ENCODE measurements at regions of chr10 and their contacts with region 1.

Region 1: DNA sequence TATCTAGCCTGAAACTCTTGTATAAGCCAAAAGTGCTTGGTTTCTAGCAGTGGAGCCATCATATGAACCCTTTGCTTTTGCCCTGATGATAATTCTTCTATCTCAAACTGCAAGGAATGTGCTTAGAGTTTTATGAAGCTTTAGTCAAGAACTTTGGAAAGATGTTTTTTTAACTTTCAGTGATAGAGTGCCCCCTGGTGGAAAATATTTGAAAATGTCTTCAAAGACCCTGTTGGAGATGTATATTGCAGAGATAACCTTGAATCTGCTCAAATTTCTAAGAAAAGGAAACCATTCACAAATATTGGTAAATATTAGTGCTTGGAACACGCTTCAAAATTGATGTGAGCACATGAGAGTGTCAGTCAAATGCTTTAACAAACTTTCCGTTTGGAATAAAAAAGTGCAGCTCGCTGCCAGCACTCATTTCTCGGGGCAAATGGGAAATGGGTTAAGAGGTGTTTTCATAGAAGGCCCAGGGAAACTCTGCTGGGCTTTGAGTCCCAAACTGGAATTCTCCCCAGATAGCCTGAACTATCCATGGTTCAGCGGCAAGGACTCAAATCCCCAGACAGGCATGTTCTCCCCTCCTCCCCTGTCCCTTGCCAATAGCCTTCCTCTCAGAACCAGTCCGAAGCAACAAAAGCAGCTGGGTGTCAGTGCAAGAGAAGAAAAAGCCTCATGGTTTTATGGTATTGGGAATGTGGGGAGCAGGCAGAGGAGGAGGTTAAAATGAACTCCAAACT is 129.3 kb downstream of the MYOF start:
- DNase-seq: no peak
- ATAC-seq: no peak
- H3K4me3 Mint-ChIP-seq: no peak overlapping the region
- H3K27ac Mint-ChIP-seq: no peak overlapping the region
- H3K4me1 Mint-ChIP-seq: no peaks in the 10 kb centered on the region
- H3K27me3 Mint-ChIP-seq: peaks cover 12% of the 10 kb centered on the region
- CTCF ChIP-seq: peak; percentile 52

Region 2: DNA sequence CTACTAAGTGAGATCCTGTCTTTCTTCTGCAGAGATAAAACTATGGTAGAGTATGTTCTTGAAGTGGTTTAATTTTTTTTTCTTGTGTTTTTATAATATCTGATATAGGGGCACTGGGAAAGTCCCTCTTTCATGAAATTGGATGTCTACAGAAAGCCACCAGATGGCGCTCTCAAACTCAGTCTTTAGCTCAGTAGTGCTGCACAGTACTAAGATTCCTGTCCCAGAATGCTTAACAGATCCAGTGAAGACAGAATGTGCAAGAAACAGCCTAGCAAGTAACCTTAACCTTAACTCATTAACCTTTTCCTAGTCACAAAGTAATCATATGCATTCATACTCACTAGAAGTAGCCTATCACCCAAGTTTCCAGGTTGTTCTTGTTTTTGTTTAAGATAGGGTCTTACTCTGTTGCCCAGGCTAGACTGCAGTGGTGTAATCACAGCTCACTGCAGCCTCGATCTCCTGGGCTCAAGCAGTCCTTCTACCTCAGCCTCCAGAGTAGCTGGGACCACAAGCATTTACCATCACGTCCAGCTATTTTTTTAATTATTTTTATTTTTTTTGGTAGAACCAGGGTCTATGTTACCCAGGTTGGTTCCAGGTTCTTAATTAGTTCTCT is 835.7 kb before region 1 on chr10:
- CTCF ChIA-PET with region 1: no interaction called
- POLR2A ChIA-PET with region 1: no interaction called
- intact Hi-C with region 1: loop called (anchors 2 kb)
- DNase-seq: no peak
- ATAC-seq: peak; percentile 88
- H3K4me3 Mint-ChIP-seq: no peak overlapping the region
- H3K27ac Mint-ChIP-seq: no peak overlapping the region
- H3K4me1 Mint-ChIP-seq: peaks cover 6% of the 10 kb centered on the region
- H3K27me3 Mint-ChIP-seq: no peaks in the 10 kb centered on the region
- CTCF ChIP-seq: peak; percentile 30

Region 3: DNA sequence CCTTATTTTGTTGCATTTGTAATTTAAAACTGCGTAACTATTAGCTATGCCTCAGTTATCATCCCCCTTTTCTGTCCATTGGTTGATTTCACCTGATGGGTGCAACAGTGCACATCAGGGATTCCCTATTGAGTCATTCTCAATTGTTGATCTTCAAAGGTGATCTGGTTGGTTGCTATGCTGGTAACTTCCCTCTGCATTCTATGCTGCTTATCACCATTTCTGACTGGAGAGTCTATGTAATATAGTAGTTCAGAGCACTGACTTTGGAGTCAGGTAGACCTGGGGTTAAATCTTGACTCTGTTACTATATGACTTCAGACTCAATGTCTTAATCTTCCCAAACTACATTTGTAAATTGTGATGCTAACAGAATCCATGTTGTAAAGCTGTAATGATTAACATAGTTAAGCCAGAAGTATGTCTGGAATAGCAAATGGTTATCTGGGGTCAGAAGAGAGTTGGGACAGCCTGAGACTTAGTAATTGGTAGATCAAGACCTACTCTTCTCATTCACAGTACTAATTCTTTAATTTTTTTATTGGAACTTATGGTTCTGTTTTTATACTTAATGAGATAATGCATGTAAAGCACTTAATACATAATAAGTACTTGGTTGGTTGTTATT is 466.4 kb before region 1 on chr10:
- CTCF ChIA-PET with region 1: interaction called, 10 read pairs
- POLR2A ChIA-PET with region 1: no interaction called
- intact Hi-C with region 1: loop called (anchors 1 kb)
- DNase-seq: no peak
- ATAC-seq: peak; percentile 60
- H3K4me3 Mint-ChIP-seq: no peak overlapping the region
- H3K27ac Mint-ChIP-seq: no peak overlapping the region
- H3K4me1 Mint-ChIP-seq: peaks cover 6% of the 10 kb centered on the region
- H3K27me3 Mint-ChIP-seq: no peaks in the 10 kb centered on the region
- CTCF ChIP-seq: no peak

Region 4: GRCh38 chr10:92965314-92965713 is 387.5 kb before region 1 on chr10:
- CTCF ChIA-PET with region 1: interaction called, 6 read pairs
- POLR2A ChIA-PET with region 1: no interaction called
- intact Hi-C with region 1: loop called (anchors 1 kb)
- DNase-seq: no peak
- ATAC-seq: no peak
- H3K4me3 Mint-ChIP-seq: no peak overlapping the region
- H3K27ac Mint-ChIP-seq: no peak overlapping the region
- H3K4me1 Mint-ChIP-seq: peaks cover 4% of the 10 kb centered on the region
- H3K27me3 Mint-ChIP-seq: no peaks in the 10 kb centered on the region
- CTCF ChIP-seq: no peak

Region 5: DNA sequence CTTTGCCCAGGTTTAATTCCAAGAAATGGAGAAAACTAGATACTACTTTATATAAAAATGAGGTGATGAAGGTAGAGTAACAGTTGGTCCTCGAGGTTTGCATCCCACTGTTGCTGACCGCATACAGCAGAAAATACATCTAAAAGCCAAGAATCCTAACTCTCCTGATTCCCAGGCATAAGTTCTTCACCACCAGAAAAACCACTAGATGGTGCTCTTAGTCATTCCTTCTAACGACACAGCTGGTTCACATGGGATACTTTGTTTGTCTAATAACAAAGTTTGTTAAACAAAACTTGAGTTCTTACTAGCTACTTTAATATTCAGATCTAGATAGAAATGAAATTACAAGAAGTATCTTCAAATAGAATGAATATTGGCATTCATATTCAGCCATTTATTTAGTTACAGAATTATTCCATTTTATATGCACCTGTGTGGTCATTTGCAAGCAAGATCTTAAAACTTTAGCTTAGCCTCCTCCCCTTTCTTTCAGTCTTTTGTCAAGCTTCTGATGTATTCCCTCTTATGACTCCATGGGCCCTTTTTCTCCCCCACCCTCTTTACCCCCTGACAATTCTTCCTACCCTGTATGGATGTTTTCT is 346.3 kb before region 1 on chr10:
- CTCF ChIA-PET with region 1: no interaction called
- POLR2A ChIA-PET with region 1: no interaction called
- intact Hi-C with region 1: loop called (anchors 1 kb)
- DNase-seq: no peak
- ATAC-seq: no peak
- H3K4me3 Mint-ChIP-seq: no peak overlapping the region
- H3K27ac Mint-ChIP-seq: no peak overlapping the region
- H3K4me1 Mint-ChIP-seq: no peaks in the 10 kb centered on the region
- H3K27me3 Mint-ChIP-seq: no peaks in the 10 kb centered on the region
- CTCF ChIP-seq: no peak

Region 6: GRCh38 chr10:93080350-93081046 is 272.3 kb before region 1 on chr10:
- CTCF ChIA-PET with region 1: interaction called, 5 read pairs
- POLR2A ChIA-PET with region 1: no interaction called
- intact Hi-C with region 1: loop called (anchors 1 kb)
- DNase-seq: no peak
- ATAC-seq: peak; percentile 56
- H3K4me3 Mint-ChIP-seq: no peak overlapping the region
- H3K27ac Mint-ChIP-seq: no peak overlapping the region
- H3K4me1 Mint-ChIP-seq: peaks cover 9% of the 10 kb centered on the region
- H3K27me3 Mint-ChIP-seq: peaks cover 51% of the 10 kb centered on the region
- CTCF ChIP-seq: no peak

Region 7: GRCh38 chr10:93115661-93116383 is 237.0 kb before region 1 on chr10:
- CTCF ChIA-PET with region 1: interaction called, 14 read pairs
- POLR2A ChIA-PET with region 1: no interaction called
- intact Hi-C with region 1: loop called (anchors 1 kb)
- DNase-seq: peak; percentile 36
- ATAC-seq: peak; percentile 69
- H3K4me3 Mint-ChIP-seq: no peak overlapping the region
- H3K27ac Mint-ChIP-seq: no peak overlapping the region
- H3K4me1 Mint-ChIP-seq: peaks cover 17% of the 10 kb centered on the region
- H3K27me3 Mint-ChIP-seq: peaks cover 4% of the 10 kb centered on the region
- CTCF ChIP-seq: no peak

Measured in activated B cell treated with CpG ODN at 0.5 μM for 24 hours (primary cell).